ENCODE measurements at regions of chr11 and their contacts with region 1.

Region 1: GRCh38 chr11:61429691-61430582 is at the starts of genes CPSF7 and SDHAF2:
- DNase-seq: peak; percentile 99
- ATAC-seq: peak; percentile 83
- H3K4me3 Mint-ChIP-seq: peak within 1 kb of the TSS; percentile 99
- H3K27ac Mint-ChIP-seq: peak within 1 kb of the TSS; percentile 99
- H3K4me1 Mint-ChIP-seq: peaks cover 59% of the 10 kb centered on the region
- H3K27me3 Mint-ChIP-seq: no peaks in the 10 kb centered on the region
- CTCF ChIP-seq: no peak
- total RNA-seq, gene CPSF7: 109 and 124 TPM in 2 replicates
- total RNA-seq, gene SDHAF2: 51.0 and 51.9 TPM in 2 replicates

Region 2: DNA sequence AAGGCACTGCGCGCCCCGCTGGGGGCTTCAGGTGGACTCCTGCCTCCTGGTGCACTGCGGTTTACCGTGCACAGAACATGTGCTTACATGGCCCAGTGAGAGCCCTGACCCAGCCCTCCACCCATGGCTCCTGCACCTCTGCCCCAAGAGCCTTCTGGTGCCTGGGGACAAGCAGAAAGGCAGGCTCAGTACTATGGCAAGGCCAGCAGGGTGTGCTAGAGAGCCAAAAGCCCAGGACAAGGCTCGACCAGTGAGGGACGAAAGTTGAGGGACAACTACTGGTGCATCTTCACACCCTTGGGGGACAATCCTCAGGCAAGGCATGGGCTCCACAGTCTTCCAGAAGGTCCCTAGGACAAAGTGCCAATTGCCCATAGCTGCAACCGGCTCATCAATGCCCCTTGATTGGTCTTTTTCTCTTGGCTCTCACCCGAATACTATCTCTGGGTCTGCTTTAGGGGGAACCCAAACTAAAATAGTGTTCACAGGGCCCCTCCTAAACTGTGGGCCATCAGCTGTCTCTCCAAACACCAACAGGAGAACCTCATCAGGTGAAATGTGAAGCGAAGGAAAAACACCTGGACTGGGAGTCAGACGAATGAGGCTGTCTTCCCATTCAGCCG is 175.4 kb before region 1 on chr11:
- CTCF ChIA-PET with region 1: interaction called, 11 read pairs
- POLR2A ChIA-PET with region 1: no interaction called
- intact Hi-C with region 1: no loop called
- DNase-seq: peak; percentile 49
- ATAC-seq: peak; percentile 93
- H3K4me3 Mint-ChIP-seq: no peak overlapping the region
- H3K27ac Mint-ChIP-seq: no peak overlapping the region
- H3K4me1 Mint-ChIP-seq: no peaks in the 10 kb centered on the region
- H3K27me3 Mint-ChIP-seq: no peaks in the 10 kb centered on the region
- CTCF ChIP-seq: no peak

Region 3: GRCh38 chr11:61361686-61362541 is 68.0 kb before region 1 on chr11 and contains the starts of genes CYB561A3 and TMEM138:
- CTCF ChIA-PET with region 1: interaction called, 4 read pairs
- POLR2A ChIA-PET with region 1: interaction called, 50 read pairs
- intact Hi-C with region 1: loop called (anchors 1 kb)
- DNase-seq: peak; percentile 84
- ATAC-seq: peak; percentile 76
- H3K4me3 Mint-ChIP-seq: peak within 1 kb of the TSS; percentile 100
- H3K27ac Mint-ChIP-seq: peak within 1 kb of the TSS; percentile 98
- H3K4me1 Mint-ChIP-seq: peaks cover 59% of the 10 kb centered on the region
- H3K27me3 Mint-ChIP-seq: no peaks in the 10 kb centered on the region
- CTCF ChIP-seq: no peak
- total RNA-seq, gene CYB561A3: 397 and 433 TPM in 2 replicates
- total RNA-seq, gene TMEM138: 69.7 and 81.2 TPM in 2 replicates

Region 4: DNA sequence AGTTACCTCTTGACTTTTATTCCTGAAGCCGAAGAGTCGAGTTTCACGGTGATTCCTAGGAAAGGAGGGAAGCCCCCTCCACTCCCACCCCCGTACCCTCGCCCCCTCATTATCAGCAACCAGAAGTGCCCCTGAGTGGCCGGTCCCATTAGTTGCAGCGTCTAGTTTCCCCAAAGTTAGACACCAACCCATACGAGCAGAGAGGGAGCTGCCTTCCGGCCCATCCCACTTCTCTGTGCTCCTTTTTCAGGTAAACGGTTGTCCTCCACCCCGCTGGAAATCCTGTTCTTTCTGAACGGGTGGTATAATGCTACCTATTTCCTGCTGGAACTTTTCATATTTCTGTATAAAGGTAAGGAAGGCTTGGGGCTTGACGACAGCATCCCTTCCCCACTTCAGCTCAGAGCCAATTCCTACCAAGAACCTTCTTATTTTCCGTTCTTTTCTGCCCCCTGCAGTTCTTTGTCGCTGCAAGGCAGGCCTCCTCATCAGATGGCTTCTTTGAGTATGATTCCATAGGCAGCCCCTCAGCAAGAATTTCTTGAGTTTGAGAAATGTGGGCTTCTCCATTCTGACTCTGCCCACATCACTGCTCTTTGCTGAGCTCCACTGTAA is 36.8 kb before region 1 on chr11:
- CTCF ChIA-PET with region 1: interaction called, 7 read pairs
- POLR2A ChIA-PET with region 1: interaction called, 38 read pairs
- intact Hi-C with region 1: loop called (anchors 2 kb)
- DNase-seq: no peak
- ATAC-seq: peak; percentile 42
- H3K4me3 Mint-ChIP-seq: peak overlapping the region; percentile 97
- H3K27ac Mint-ChIP-seq: peak overlapping the region; percentile 96
- H3K4me1 Mint-ChIP-seq: peaks cover 26% of the 10 kb centered on the region
- H3K27me3 Mint-ChIP-seq: no peaks in the 10 kb centered on the region
- CTCF ChIP-seq: no peak

Region 5: DNA sequence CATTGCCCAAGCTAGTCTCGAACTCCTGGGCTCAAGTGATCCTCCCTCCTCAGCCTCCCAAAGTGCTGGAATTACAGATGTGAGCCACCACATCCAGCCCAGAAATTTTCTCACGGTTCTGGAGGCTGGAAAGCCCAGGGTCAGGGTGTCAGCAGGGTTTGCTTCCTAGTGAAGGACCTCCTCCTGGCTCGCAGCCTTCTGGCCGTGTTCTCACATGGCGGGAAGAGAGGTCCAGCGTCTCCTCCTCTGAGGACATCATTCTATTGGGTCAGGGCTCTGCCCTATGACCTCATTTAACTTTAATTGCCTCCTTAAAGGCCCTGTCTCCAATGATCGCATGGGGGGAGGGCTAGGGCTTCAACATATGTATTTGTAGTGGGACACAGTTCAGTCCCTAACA is 38.1 kb after region 1 on chr11:
- CTCF ChIA-PET with region 1: no interaction called
- POLR2A ChIA-PET with region 1: interaction called, 16 read pairs
- intact Hi-C with region 1: no loop called
- DNase-seq: no peak
- ATAC-seq: no peak
- H3K4me3 Mint-ChIP-seq: no peak overlapping the region
- H3K27ac Mint-ChIP-seq: no peak overlapping the region
- H3K4me1 Mint-ChIP-seq: no peaks in the 10 kb centered on the region
- H3K27me3 Mint-ChIP-seq: no peaks in the 10 kb centered on the region
- CTCF ChIP-seq: no peak